Psoas muscle (tissue), 8 donors: ENCODE measurements at regions of chr4 and their contacts with region 1.

Region 1: GRCh38 chr4:7802093-7802726 is 137.5 kb downstream of the AFAP1 start:
- DNase-seq: peak; percentile 75 to 86
- ATAC-seq: peak; percentile 62 to 82 (median 74)
- H3K4me3 ChIP-seq: no peak overlapping the region
- H3K27ac ChIP-seq: no peak overlapping the region
- H3K4me1 ChIP-seq: peaks cover 31% of the 10 kb centered on the region
- H3K27me3 ChIP-seq: no peaks in the 10 kb centered on the region
- CTCF ChIP-seq: peak; percentile 94

Region 2: GRCh38 chr4:7192252-7193029 is 609.8 kb before region 1 on chr4 and contains the start of gene SORCS2:
- intact Hi-C with region 1: loop called in 1 of 2 experiments (anchors 5 kb)
- DNase-seq: peak; percentile 67 to 82
- ATAC-seq: peak; percentile 83 to 94 (median 91)
- H3K4me3 ChIP-seq: peak within 1 kb of the TSS; percentile 60
- H3K27ac ChIP-seq: no peak within 1 kb of the TSS
- H3K4me1 ChIP-seq: peaks cover 7% of the 10 kb centered on the region
- H3K27me3 ChIP-seq: peaks cover 0 to 39% (median 9%) of the 10 kb centered on the region in 3 donors
- CTCF ChIP-seq: peak; percentile 88
- total RNA-seq, gene SORCS2: 0.36 to 1.5 (median 0.89) TPM

Region 3: GRCh38 chr4:7736436-7737269 is 65.6 kb before region 1 on chr4:
- intact Hi-C with region 1: no loop called
- DNase-seq: peak in 1 of 2 donors; percentile 29
- ATAC-seq: no peak
- H3K4me3 ChIP-seq: no peak overlapping the region
- H3K27ac ChIP-seq: no peak overlapping the region
- H3K4me1 ChIP-seq: no peaks in the 10 kb centered on the region
- H3K27me3 ChIP-seq: peaks cover 0 to 1% (median 0%) of the 10 kb centered on the region in 3 donors
- CTCF ChIP-seq: no peak

Region 4: GRCh38 chr4:7761720-7762119 is 40.5 kb before region 1 on chr4:
- intact Hi-C with region 1: loop called in 1 of 2 experiments (anchors 5 kb)
- DNase-seq: peak; percentile 81 to 89
- ATAC-seq: peak; percentile 73 to 88 (median 81)
- H3K4me3 ChIP-seq: no peak overlapping the region
- H3K27ac ChIP-seq: no peak overlapping the region
- H3K4me1 ChIP-seq: peaks cover 8% of the 10 kb centered on the region
- H3K27me3 ChIP-seq: no peaks in the 10 kb centered on the region
- CTCF ChIP-seq: peak; percentile 66

Region 5: GRCh38 chr4:7843831-7844593 is 41.8 kb after region 1 on chr4:
- intact Hi-C with region 1: loop called (anchors 1 to 5 kb)
- DNase-seq: peak; percentile 83 to 90
- ATAC-seq: peak; percentile 79 to 91 (median 85)
- H3K4me3 ChIP-seq: no peak overlapping the region
- H3K27ac ChIP-seq: no peak overlapping the region
- H3K4me1 ChIP-seq: peaks cover 17% of the 10 kb centered on the region
- H3K27me3 ChIP-seq: no peaks in the 10 kb centered on the region
- CTCF ChIP-seq: peak; percentile 67

Region 6: GRCh38 chr4:7929118-7929951 is 127.1 kb after region 1 on chr4:
- intact Hi-C with region 1: loop called (anchors 1 to 5 kb)
- DNase-seq: no peak
- ATAC-seq: peak; percentile 88 to 93 (median 90)
- H3K4me3 ChIP-seq: no peak overlapping the region
- H3K27ac ChIP-seq: no peak overlapping the region
- H3K4me1 ChIP-seq: peaks cover under 1% of the 10 kb centered on the region
- H3K27me3 ChIP-seq: no peaks in the 10 kb centered on the region
- CTCF ChIP-seq: peak; percentile 52

Region 7: DNA sequence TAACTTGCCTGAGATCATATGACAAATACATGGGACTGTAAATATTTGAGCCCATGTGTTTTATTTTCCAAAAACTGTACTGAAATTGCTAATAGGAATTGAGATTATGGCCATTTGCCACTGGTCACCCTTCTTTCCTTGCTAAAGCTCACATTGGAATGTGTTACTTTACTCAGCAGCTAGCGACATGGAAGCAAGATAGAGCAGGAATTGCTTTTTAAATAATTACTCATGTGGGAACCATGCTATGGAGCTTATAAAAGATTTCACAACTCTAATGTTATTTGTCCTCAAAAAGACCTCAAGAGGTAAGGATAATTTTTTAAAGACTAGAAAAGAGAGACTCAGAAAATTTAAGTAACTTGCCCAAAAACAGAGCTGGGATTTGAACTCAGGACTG is 186.2 kb after region 1 on chr4:
- intact Hi-C with region 1: loop called in 1 of 2 experiments (anchors 2 kb)
- DNase-seq: no peak
- ATAC-seq: no peak
- H3K4me3 ChIP-seq: no peak overlapping the region
- H3K27ac ChIP-seq: peak overlapping the region; percentile 34
- H3K4me1 ChIP-seq: peaks cover 22% of the 10 kb centered on the region
- H3K27me3 ChIP-seq: no peaks in the 10 kb centered on the region
- CTCF ChIP-seq: no peak